ENCODE measurements at regions of chr10 and their contacts with region 1.

Region 1: DNA sequence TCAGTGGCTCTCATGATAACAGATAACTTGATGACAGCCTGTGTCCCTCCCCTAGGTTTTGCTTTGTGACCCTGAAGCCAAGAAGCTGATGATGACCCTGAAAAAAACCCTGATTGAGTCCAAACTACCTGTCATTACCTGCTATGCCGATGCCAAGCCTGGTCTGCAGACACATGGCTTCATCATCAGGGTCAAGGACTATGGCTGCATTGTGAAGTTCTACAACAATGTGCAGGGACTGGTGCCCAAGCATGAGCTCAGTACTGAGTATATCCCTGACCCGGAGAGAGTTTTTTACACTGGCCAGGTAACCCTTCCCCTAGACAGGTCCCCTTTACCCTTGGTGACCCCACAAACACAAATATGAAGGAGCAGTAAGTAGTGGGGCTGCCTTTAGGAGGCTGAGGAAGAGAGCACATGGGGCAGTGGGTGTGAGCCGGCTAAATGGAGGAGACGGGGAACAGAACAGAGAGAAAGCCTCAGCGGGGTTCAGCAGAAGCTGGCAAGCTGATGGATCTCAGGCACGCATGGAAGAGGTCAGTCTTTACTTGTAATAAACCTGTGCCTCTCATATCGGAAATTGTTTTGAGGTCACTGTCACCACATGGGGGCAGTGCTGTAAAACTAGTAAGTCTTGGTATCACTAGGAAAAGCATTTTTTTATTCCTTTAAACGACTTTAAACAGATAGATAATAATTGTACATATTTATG is 20.2 kb downstream of the PDCD11 start:
- DNase-seq: no peak
- H3K4me3 ChIP-seq: no peak overlapping the region
- CTCF ChIP-seq: peak; percentile 46

Region 2: GRCh38 chr10:102782673-102783551 is 633.7 kb before region 1 on chr10:
- CTCF ChIA-PET with region 1: no interaction called
- POLR2A ChIA-PET with region 1: no interaction called
- DNase-seq: peak; percentile 61
- H3K4me3 ChIP-seq: no peak overlapping the region
- CTCF ChIP-seq: no peak

Region 3: GRCh38 chr10:103397191-103397825 is 19.3 kb before region 1 on chr10:
- CTCF ChIA-PET with region 1: interaction called, 87 read pairs
- POLR2A ChIA-PET with region 1: interaction called, 3 read pairs
- DNase-seq: no peak
- H3K4me3 ChIP-seq: peak overlapping the region; percentile 95
- CTCF ChIP-seq: no peak

Region 4: DNA sequence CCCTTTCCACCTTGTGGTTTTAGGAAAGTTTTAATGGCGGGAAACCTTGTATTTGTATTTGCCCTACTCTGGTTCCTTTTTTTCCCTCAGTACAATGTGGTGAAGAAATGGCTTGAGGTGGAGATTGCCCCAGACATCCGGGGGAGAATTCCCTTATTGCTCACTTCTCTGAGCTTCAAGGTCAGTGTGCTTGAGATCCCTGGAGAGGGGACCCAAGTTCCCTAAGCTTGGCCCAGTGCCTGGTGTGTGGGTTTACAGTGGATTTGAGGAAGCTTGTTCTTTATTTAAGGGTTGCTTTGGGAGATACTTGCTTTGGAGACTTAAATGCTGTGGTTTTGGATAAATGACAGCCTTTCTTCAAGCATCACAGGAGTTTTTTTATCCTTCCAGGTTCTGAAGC is 17.3 kb after region 1 on chr10:
- CTCF ChIA-PET with region 1: interaction called, 41 read pairs
- POLR2A ChIA-PET with region 1: no interaction called
- DNase-seq: no peak
- H3K4me3 ChIP-seq: no peak overlapping the region
- CTCF ChIP-seq: no peak

Region 5: DNA sequence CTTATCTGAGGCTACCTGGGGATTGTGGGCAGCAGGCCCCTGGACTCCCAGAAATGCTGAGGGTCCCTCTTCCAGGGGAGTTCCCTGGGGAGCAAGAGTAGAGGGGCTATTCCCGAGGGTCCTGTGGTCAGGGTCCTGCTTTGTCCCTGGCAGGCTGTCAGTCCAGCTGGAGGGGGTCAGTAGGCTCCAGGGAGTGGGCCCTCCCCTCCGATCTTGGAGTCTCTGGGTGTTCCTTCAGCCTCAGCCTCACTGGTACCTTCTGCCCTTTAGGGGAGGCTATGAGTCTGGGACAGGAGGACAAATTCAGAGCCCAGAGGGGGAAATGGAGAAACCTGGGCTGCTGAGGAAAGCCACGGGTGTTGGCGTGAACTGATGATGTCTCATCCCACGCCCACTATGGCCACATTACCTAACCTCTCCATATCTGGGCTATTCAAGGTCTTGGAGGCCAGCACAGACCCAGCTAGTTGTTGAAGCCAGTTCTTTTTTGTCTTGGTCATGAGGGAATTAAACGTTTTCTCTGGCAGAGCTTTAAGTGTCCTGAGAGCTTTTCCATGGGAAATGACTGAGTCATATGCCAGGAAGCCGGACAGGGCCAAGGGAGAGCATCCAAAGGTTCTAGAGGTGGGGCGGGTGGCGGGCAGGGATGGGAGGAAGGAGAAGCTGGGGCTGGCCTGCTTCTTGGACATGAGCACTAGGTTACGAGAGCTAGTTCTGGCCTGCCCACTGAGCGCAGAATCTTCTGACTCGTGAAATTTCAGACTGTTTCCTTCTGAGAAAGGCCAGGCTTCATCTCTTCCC is 29.4 kb after region 1 on chr10:
- CTCF ChIA-PET with region 1: interaction called, 18 read pairs
- POLR2A ChIA-PET with region 1: no interaction called
- DNase-seq: no peak
- H3K4me3 ChIP-seq: no peak overlapping the region
- CTCF ChIP-seq: no peak

Region 6: GRCh38 chr10:103476046-103476995 is 59.7 kb after region 1 on chr10:
- CTCF ChIA-PET with region 1: interaction called, 40 read pairs
- POLR2A ChIA-PET with region 1: no interaction called
- DNase-seq: no peak
- H3K4me3 ChIP-seq: no peak overlapping the region
- CTCF ChIP-seq: peak; percentile 17

Region 7: GRCh38 chr10:103491493-103492381 is 75.1 kb after region 1 on chr10:
- CTCF ChIA-PET with region 1: interaction called, 250 read pairs
- POLR2A ChIA-PET with region 1: no interaction called
- DNase-seq: peak; percentile 92
- H3K4me3 ChIP-seq: no peak overlapping the region
- CTCF ChIP-seq: no peak

Measured in AG04449 (cell line).